Right ventricle myocardium superior (tissue), 1 donor: ENCODE measurements at regions of chr17 and their contacts with region 1.

Region 1: DNA sequence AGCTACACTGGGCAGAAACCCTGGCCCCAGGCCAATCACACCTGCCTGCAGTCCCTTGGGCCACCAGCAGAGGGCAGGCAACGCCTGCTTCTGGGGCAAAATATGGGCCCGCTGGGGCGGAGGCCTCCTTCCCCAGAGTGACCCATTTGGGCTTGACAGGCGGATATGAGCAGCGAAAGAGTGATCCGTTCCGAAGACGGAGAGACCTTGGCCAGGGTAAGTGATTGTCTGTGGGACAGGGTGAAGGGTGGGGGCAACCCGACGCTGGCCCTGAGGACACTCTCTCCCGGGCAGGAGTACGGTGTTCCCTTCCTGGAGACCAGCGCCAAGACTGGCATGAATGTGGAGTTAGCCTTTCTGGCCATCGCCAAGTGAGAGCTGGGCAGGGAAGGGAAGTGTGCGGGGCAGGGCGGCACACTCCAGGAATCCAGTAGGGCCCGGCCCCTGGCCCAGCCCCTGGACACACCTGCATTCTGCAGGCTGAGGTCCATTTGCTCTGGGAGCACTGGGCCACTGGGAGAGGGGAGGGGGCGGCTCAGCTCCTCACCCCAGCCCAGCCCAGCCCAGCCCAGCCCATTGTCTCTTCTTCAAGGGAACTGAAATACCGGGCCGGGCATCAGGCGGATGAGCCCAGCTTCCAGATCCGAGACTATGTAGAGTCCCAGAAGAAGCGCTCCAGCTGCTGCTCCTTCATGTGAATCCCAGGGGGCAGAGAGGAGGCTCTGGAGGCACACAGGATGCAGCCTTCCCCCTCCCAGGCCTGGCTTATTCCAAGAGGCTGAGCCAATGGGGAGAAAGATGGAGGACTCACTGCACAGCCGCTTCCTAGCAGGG is 3.5 kb upstream of the NHERF1 start:
- DNase-seq: peak; percentile 94
- ATAC-seq: peak; percentile 43

Region 2: DNA sequence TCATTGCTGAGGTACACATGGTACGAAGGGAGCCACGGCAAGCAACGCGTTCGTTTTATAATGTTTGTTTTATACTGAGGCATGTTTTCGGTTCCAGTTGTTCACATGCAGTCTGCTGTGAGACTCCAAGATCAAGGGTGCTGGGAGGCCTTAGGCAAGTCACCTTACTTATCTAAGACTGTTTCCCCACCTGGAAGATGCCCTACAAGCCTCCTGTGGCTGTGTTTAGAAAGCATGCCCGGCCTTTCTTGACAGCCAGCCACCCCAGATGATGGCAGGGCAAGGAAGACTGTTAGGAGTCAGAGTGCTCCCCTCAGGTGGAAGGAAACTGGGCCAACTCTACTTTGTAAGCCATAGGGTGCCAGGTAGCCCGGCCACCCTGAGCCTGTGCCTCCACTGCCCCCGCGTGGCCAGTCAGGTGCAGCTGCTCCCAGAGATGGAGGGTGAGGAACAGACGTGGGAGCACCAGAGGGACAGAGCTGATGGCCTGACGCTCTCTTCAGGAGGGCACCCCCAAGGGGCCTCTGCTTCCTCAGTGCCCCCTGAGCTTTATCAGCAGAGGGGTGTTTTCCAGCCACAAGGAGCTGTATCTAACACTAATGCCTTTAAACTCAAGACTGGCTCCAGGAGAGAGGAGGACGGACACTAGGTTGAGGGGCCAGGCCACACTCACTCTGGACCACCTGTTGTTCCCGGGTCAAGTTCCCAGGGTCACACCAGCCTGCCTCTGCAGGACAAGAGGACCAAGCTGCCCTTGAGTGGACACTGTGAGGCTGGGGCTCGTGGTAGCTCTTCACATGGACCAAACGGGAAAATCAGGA is 25.8 kb after region 1 on chr17:
- intact Hi-C with region 1: loop called (anchors 2 kb)
- DNase-seq: peak; percentile 74
- ATAC-seq: peak; percentile 73

Region 3: GRCh38 chr17:74776044-74776977 is 31.4 kb after region 1 on chr17 and contains the start of gene NAT9:
- intact Hi-C with region 1: loop called (anchors 2 kb)
- DNase-seq: peak; percentile 99
- ATAC-seq: peak; percentile 97
- total RNA-seq, gene NAT9: 18.6 TPM

Region 4: GRCh38 chr17:74864866-74865395 is 120.0 kb after region 1 on chr17:
- intact Hi-C with region 1: loop called (anchors 2 kb)
- DNase-seq: peak; percentile 85
- ATAC-seq: peak; percentile 73

Region 5: GRCh38 chr17:75380315-75380714 is 635.4 kb after region 1 on chr17:
- intact Hi-C with region 1: no loop called
- DNase-seq: no peak
- ATAC-seq: no peak

Region 6: GRCh38 chr17:75749545-75750389 is 1004.8 kb after region 1 on chr17:
- intact Hi-C with region 1: no loop called
- DNase-seq: peak; percentile 93
- ATAC-seq: peak; percentile 83